ENCODE measurements at regions of chr19 and their contacts with region 1.

Region 1: GRCh38 chr19:40055832-40056504 is at the start of gene ZNF780B:
- DNase-seq: peak; percentile 52 to 78 (median 73)
- ATAC-seq: peak; percentile 97 to 99
- H3K4me3 ChIP-seq: peak within 1 kb of the TSS; percentile 54
- H3K27ac ChIP-seq: peak within 1 kb of the TSS; percentile 53
- H3K4me1 ChIP-seq: peaks cover 2% of the 10 kb centered on the region
- H3K27me3 ChIP-seq: no peaks in the 10 kb centered on the region
- total RNA-seq, gene ZNF780B: 29.5 to 35.2 (median 30.9) TPM

Region 2: GRCh38 chr19:39970675-39971379 is 85.1 kb before region 1 on chr19 and contains the start of gene PSMC4:
- intact Hi-C with region 1: loop called in 1 of 4 experiments (anchors 10 kb)
- DNase-seq: peak; percentile 98 to 99 (median 99)
- ATAC-seq: peak; percentile 100
- H3K4me3 ChIP-seq: peak within 1 kb of the TSS; percentile 92
- H3K27ac ChIP-seq: peak within 1 kb of the TSS; percentile 79
- H3K4me1 ChIP-seq: peaks cover 4% of the 10 kb centered on the region
- H3K27me3 ChIP-seq: no peaks in the 10 kb centered on the region
- total RNA-seq, gene PSMC4: 66.7 to 82.3 (median 70.6) TPM